Activated B cell treated with CpG ODN at 0.5 μM for 24 hours (primary cell): ENCODE measurements at regions of chr11 and their contacts with region 1.

Region 1: GRCh38 chr11:96188243-96189006 is 154.6 kb downstream of the MAML2 start:
- DNase-seq: no peak
- ATAC-seq: peak; percentile 25
- H3K4me3 Mint-ChIP-seq: peak overlapping the region; percentile 39
- H3K27ac Mint-ChIP-seq: peak overlapping the region; percentile 57
- H3K4me1 Mint-ChIP-seq: peaks cover 69% of the 10 kb centered on the region
- H3K27me3 Mint-ChIP-seq: no peaks in the 10 kb centered on the region
- CTCF ChIP-seq: no peak

Region 2: GRCh38 chr11:96143016-96143670 is 45.3 kb before region 1 on chr11:
- CTCF ChIA-PET with region 1: no interaction called
- POLR2A ChIA-PET with region 1: interaction called, 3 read pairs
- intact Hi-C with region 1: loop called (anchors 5 kb)
- DNase-seq: no peak
- ATAC-seq: no peak
- H3K4me3 Mint-ChIP-seq: no peak overlapping the region
- H3K27ac Mint-ChIP-seq: no peak overlapping the region
- H3K4me1 Mint-ChIP-seq: peaks cover 12% of the 10 kb centered on the region
- H3K27me3 Mint-ChIP-seq: no peaks in the 10 kb centered on the region
- CTCF ChIP-seq: no peak

Region 3: GRCh38 chr11:96279018-96279895 is 90.8 kb after region 1 on chr11:
- CTCF ChIA-PET with region 1: no interaction called
- POLR2A ChIA-PET with region 1: no interaction called
- intact Hi-C with region 1: no loop called
- DNase-seq: no peak
- ATAC-seq: no peak
- H3K4me3 Mint-ChIP-seq: no peak overlapping the region
- H3K27ac Mint-ChIP-seq: no peak overlapping the region
- H3K4me1 Mint-ChIP-seq: peaks cover 48% of the 10 kb centered on the region
- H3K27me3 Mint-ChIP-seq: no peaks in the 10 kb centered on the region
- CTCF ChIP-seq: no peak